ENCODE measurements at regions of chr6 and their contacts with region 1.

Region 1: GRCh38 chr6:81752138-81752920 is at the start of gene TENT5A:
- H3K4me3 ChIP-seq: peak within 1 kb of the TSS; percentile 95
- H3K27ac ChIP-seq: peak within 1 kb of the TSS; percentile 72
- H3K4me1 ChIP-seq: peaks cover 2% of the 10 kb centered on the region; the same call in 1 of the 2 replicates
- CTCF ChIP-seq: peak; percentile 93

Region 2: GRCh38 chr6:81562169-81562568 is 190.2 kb before region 1 on chr6:
- CTCF ChIA-PET with region 1: no interaction called
- POLR2A ChIA-PET with region 1: interaction called, 20 read pairs
- H3K4me3 ChIP-seq: peak overlapping the region; percentile 24; the same call in 1 of the 2 replicates
- H3K27ac ChIP-seq: no peak overlapping the region
- H3K4me1 ChIP-seq: peaks cover 13% of the 10 kb centered on the region; the same call in 1 of the 2 replicates
- CTCF ChIP-seq: no peak

Region 3: DNA sequence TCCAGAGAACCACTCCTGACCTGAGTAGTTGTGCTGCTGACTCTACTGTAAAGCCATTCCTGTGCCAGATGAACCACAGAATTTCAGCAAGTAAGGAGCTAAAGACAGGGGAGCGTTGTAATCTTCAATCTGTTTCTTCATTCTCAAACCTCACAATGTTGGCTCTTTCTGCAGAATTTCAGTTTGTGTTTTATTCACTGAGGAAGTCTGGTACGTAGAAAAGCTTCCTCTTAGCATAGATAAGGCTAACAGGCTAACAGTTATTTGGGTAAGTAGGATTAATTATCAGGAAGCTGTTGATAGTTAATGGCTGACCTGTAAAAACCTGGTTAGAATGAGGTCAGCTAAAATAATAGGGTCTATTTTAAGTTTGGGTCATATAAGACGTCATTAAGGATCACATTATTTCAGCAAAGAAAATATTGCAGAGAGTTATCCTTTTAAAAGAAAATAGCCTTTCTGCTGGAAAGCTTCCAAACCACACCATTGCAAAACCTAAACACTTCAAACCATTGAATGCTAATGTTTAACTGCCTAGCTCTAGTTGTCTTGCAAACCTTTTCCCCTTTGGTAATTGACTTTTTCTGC is 14.2 kb after region 1 on chr6:
- CTCF ChIA-PET with region 1: interaction called, 7 read pairs
- POLR2A ChIA-PET with region 1: interaction called, 23 read pairs
- H3K4me3 ChIP-seq: no peak overlapping the region
- H3K27ac ChIP-seq: peak overlapping the region; percentile 26; the same call in 1 of the 2 replicates
- H3K4me1 ChIP-seq: peaks cover 9% of the 10 kb centered on the region; the same call in 1 of the 2 replicates
- CTCF ChIP-seq: no peak

Region 4: GRCh38 chr6:82022601-82023102 is 270.3 kb after region 1 on chr6:
- CTCF ChIA-PET with region 1: interaction called, 3 read pairs
- POLR2A ChIA-PET with region 1: interaction called, 10 read pairs
- H3K4me3 ChIP-seq: no peak overlapping the region
- H3K27ac ChIP-seq: no peak overlapping the region
- H3K4me1 ChIP-seq: no peaks in the 10 kb centered on the region
- CTCF ChIP-seq: no peak